ENCODE measurements at regions of chr1 and their contacts with region 1.

Region 1: DNA sequence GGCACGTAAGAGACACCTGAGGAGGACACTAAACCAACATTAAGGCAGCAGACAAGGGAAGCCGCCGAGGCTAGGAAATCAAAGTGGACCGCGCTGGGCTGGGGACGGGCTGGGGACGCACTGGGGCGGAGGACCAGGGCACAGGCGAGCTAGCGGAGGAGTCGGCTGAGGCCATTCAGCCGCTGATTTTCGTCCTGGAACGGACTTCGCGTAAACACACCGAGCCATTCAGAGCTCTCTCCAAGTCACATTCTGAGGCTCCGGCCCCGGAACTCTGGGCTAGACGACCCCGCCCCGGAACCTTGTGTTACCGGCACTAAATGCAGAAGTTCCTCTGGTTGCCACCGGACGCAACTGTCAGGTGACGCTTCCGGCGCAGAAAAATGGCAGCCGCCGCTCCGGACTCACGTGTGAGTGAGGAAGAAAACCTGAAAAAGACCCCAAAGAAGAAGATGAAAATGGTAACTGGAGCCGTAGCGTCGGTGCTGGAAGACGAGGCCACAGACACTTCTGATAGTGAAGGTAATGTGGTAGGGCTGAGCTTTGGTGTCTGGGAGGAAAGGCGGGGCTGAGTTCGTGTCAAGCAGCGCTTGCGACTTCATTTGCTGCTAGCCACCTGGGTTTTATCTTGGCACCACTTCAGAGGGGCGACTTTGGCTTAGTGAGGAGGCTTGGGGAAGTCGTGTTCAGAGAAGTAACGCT is at the start of gene RRP15:
- DNase-seq: peak; percentile 93
- H3K4me3 ChIP-seq: peak within 1 kb of the TSS; percentile 78
- H3K27ac ChIP-seq: peak within 1 kb of the TSS; percentile 63
- H3K4me1 ChIP-seq: peaks cover 7% of the 10 kb centered on the region
- H3K27me3 ChIP-seq: no peaks in the 10 kb centered on the region
- CTCF ChIP-seq: no peak
- total RNA-seq, gene RRP15: 31.3 and 38.4 TPM in 2 replicates

Region 2: DNA sequence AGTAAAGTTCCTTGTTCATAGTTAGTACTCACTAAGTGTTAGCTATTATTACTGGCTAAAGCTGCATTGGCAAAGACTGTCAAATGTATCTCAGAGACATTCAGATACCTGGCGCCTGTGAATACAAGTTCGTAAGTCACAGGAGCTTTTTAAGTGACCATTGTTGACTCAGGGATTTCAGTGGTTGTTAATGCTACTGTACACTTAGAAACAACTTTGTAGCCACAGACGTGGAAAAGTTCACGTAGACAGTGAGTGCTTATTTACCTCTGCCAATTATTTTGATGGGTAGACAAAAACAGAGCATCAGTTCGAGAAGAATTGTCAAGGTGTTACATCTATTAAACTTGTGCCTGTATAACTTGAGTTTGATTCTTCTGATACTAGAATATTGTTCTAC is 59.1 kb before region 1 on chr1:
- CTCF ChIA-PET with region 1: interaction called, 16 read pairs
- POLR2A ChIA-PET with region 1: no interaction called
- intact Hi-C with region 1: no loop called
- DNase-seq: no peak
- H3K4me3 ChIP-seq: no peak overlapping the region
- H3K27ac ChIP-seq: no peak overlapping the region
- H3K4me1 ChIP-seq: no peaks in the 10 kb centered on the region
- H3K27me3 ChIP-seq: peaks cover 58% of the 10 kb centered on the region
- CTCF ChIP-seq: no peak

Region 3: DNA sequence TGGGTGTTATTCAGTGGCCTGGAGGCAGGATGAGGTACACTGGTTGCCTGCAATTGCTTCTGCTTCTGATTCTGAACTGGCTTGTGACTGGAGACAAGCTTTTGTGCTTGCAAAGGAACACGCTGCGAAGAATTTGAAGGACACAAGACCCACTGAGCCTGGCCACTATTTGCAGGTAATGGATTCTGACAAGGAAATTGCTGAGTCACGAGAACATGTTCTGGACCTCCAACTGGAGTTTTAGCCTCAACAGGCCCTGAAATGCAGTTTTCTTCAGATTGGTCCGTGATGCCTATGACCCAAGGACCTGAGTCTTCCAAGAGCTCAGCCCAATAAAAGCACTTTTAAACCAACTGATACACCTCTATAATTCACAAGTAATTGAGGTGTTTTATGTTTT is 1982.5 kb after region 1 on chr1:
- CTCF ChIA-PET with region 1: no interaction called
- POLR2A ChIA-PET with region 1: interaction called, 22 read pairs
- intact Hi-C with region 1: no loop called
- DNase-seq: no peak
- H3K4me3 ChIP-seq: no peak overlapping the region
- H3K27ac ChIP-seq: no peak overlapping the region
- H3K4me1 ChIP-seq: no peaks in the 10 kb centered on the region
- H3K27me3 ChIP-seq: no peaks in the 10 kb centered on the region
- CTCF ChIP-seq: no peak